ENCODE measurements at regions of chr1 and their contacts with region 1.

Region 1: DNA sequence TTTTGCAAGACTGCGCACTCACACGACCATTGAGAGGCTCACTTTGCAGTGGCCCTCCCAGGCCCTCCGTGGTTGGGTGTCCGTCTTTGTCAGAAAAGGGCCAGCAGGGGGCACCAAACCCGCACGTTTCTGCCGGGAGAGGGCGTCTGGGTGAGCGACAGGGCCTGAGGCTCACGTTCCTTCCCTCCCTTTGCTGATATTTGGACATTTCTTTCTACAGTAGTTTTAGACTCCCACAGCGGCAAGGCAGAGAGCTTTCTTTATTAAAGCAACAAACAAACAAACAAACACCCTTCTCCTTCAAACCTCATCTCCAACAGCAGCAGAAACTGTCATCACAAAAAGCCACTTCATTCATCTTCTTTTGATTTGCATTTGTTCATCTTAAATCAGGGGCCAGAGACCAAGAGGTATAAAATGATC is 79.2 kb upstream of the WDR26 start:
- DNase-seq: peak; percentile 92
- ATAC-seq: peak; percentile 97
- H3K4me3 ChIP-seq: no peak overlapping the region
- H3K27ac ChIP-seq: no peak overlapping the region
- H3K4me1 ChIP-seq: no peaks in the 10 kb centered on the region
- H3K27me3 ChIP-seq: no peaks in the 10 kb centered on the region
- CTCF ChIP-seq: peak; percentile 92

Region 2: DNA sequence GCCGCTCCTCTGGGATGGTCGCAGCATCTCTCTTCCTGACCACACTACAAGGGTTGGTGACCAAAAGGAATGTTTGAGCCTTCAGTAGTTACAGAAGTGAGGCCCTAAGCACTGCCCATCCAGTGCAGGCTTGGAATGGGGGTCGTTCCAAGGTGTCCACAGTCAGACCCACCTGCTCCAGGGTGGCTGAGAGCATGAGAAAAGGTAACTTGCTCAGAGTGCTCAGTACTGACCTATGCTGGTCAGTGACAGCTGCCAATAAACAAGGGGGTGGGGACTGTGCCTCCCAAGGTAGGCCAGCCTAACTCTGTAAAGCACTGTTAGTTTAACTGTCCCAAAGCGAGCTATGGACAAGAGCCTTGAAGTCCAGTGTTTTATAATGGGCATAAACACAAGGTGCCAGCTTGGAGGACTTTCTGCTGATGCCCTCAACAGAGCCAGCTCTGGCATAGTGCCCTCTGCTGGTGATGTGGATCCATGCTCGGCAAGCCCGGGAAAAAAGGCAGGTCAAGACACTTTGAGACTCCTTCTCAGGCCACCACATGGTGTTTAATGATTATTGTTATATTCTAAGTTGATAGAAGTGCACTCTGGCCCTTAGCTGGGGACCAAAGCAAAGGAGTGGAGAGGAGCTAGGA is 337.5 kb after region 1 on chr1:
- intact Hi-C with region 1: loop called (anchors 5 kb)
- DNase-seq: peak; percentile 79
- ATAC-seq: peak; percentile 85
- H3K4me3 ChIP-seq: no peak overlapping the region
- H3K27ac ChIP-seq: no peak overlapping the region
- H3K4me1 ChIP-seq: no peaks in the 10 kb centered on the region
- H3K27me3 ChIP-seq: no peaks in the 10 kb centered on the region
- CTCF ChIP-seq: peak; percentile 73